Heart right ventricle (tissue), 16 donors: ENCODE measurements at regions of chr11 and their contacts with region 1.

Region 1: GRCh38 chr11:119196833-119197483 is 9.2 kb upstream of the CBL start:
- DNase-seq: peak in 1 of 2 donors; percentile 79
- ATAC-seq: peak; percentile 66 to 91 (median 84)
- H3K4me3 ChIP-seq: no peak overlapping the region
- H3K27ac ChIP-seq: no peak overlapping the region
- H3K4me1 ChIP-seq: peaks cover 0 to 18% (median 0%) of the 10 kb centered on the region in 9 donors
- H3K27me3 ChIP-seq: no peaks in the 10 kb centered on the region
- CTCF ChIP-seq: peak; percentile 66 to 87 (median 81)

Region 2: GRCh38 chr11:119101759-119102423 is 95.1 kb before region 1 on chr11 and contains the start of gene DPAGT1:
- intact Hi-C with region 1: loop called in 6 of 10 experiments (anchors 5 to 10 kb)
- DNase-seq: peak; percentile 81 to 95
- ATAC-seq: peak; percentile 94 to 97 (median 96)
- H3K4me3 ChIP-seq: peak within 1 kb of the TSS; percentile 69 to 89 (median 79)
- H3K27ac ChIP-seq: peak within 1 kb of the TSS; percentile 83 to 96 (median 92)
- H3K4me1 ChIP-seq: peaks cover 10 to 50% (median 35%) of the 10 kb centered on the region in 9 donors
- H3K27me3 ChIP-seq: no peaks in the 10 kb centered on the region
- CTCF ChIP-seq: no peak
- total RNA-seq, gene DPAGT1: 8.6 to 23.2 (median 16.5) TPM

Region 3: GRCh38 chr11:119153049-119153818 is 43.7 kb before region 1 on chr11:
- intact Hi-C with region 1: loop called in 7 of 10 experiments (anchors 5 to 10 kb)
- DNase-seq: no peak
- ATAC-seq: no peak
- H3K4me3 ChIP-seq: no peak overlapping the region
- H3K27ac ChIP-seq: no peak overlapping the region
- H3K4me1 ChIP-seq: peaks cover 0 to 18% (median 7%) of the 10 kb centered on the region in 9 donors
- H3K27me3 ChIP-seq: peaks cover 0 to 45% (median 6%) of the 10 kb centered on the region in 7 donors
- CTCF ChIP-seq: no peak

Region 4: GRCh38 chr11:119445850-119446249 is 248.9 kb after region 1 on chr11:
- intact Hi-C with region 1: no loop called
- DNase-seq: no peak
- ATAC-seq: no peak
- H3K4me3 ChIP-seq: no peak overlapping the region
- H3K27ac ChIP-seq: no peak overlapping the region
- H3K4me1 ChIP-seq: peaks cover 0 to 10% (median 0%) of the 10 kb centered on the region in 9 donors
- H3K27me3 ChIP-seq: peaks cover 0 to 7% (median 0%) of the 10 kb centered on the region in 7 donors
- CTCF ChIP-seq: no peak